SK-N-SH (cell line): ENCODE measurements at regions of chr5 and their contacts with region 1.

Region 1: DNA sequence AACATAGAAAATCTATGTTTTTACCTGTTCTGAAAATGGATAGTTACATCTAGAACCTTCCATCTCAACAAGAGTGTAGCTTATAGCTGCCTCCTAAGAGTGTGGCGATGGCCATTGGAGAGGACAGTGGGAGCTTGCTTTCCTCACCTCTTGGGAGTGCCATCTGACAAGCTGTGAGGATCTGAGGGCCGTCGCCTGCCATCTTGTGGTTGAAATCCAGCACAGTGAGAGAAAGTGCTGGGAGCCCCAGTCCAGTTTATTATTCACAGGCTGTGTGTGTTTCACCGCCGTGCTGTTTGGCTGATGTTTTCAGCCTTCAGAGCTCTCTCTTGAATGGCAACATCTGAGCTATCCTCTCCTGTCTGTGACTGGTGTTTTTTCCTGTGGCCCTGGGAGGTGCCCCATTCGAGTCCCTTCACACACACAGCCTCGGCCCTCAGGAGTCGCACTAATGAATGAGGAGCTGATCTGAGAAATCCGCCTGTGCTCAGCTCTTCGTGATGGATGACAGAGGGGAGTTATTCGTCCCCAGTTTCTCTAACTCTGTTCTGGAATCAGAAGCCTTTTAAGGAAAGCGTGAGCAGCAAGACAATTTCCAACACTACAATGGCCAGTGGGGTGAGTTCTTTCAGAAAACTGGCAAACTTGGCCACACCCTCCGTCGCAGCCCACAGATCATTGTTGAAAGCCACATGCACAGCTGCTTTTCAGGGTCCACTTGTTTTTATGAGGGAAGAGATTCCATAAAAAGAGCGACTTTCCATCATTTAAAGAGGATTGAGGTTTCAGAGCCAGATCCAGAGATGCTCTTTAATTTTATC is 170.3 kb downstream of the PDZD2 start:
- DNase-seq: peak; percentile 82
- H3K4me3 ChIP-seq: no peak overlapping the region
- H3K27ac ChIP-seq: no peak overlapping the region
- H3K4me1 ChIP-seq: peaks cover 0 to 13% of the 10 kb centered on the region in 2 experiments; a peak in 1 of 4 replicates
- H3K27me3 ChIP-seq: peaks cover 5% of the 10 kb centered on the region; the same call in 1 of the 2 replicates
- CTCF ChIP-seq: peak; percentile 65
- EP300 ChIP-seq: no peak
- RAD21 ChIP-seq: peak; percentile 98

Region 2: DNA sequence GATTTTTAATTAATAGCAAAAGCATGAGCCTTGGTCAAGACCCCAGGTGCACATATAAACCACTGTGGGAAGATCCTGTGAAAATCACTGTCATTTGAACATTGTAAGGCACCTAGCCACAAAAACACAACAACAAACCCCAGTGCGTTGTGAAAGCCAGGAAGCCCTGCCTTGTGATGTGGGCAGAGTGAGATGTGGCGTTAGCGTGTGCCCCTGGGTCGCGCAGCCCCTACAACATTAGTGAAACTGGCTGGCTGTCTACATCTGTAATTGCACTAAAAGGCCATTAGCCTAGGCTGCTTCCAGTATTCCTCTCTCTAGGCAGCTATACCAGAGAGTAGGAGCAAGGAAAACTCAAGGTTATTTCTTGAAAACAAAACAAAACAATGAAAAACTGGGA is 191.4 kb before region 1 on chr5:
- CTCF ChIA-PET with region 1: interaction called, 10 read pairs
- POLR2A ChIA-PET with region 1: no interaction called
- DNase-seq: peak; percentile 61
- H3K4me3 ChIP-seq: no peak overlapping the region
- H3K27ac ChIP-seq: peak overlapping the region in 1 of 2 experiments; percentile 24; a peak in 1 of 4 replicates
- H3K4me1 ChIP-seq: peaks cover 0 to 5% of the 10 kb centered on the region in 2 experiments; a peak in 1 of 4 replicates
- H3K27me3 ChIP-seq: no peaks in the 10 kb centered on the region
- CTCF ChIP-seq: no peak
- EP300 ChIP-seq: no peak
- RAD21 ChIP-seq: no peak

Region 3: DNA sequence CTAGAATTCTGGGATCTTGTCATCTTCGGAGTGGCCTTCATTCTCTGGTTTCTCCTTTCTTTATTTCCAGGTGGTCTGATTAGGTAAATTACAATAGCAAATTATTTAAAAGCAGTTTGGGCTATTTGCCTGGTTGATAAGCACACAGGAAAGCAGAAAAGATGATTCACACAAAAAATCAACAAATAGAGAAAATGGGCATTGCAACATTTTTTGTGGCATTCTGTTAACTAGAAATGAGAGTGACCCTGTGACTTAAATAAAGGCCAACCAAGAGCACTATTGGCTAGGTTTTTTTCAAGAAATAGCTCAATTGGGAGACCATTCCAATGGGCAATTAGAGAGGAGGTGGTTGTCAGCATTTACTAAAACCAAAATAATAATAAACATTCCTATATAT is 176.8 kb before region 1 on chr5:
- CTCF ChIA-PET with region 1: interaction called, 60 read pairs
- POLR2A ChIA-PET with region 1: no interaction called
- DNase-seq: no peak
- H3K4me3 ChIP-seq: no peak overlapping the region
- H3K27ac ChIP-seq: no peak overlapping the region
- H3K4me1 ChIP-seq: peaks cover 0 to 9% of the 10 kb centered on the region in 2 experiments; a peak in 1 of 4 replicates
- H3K27me3 ChIP-seq: peaks cover 13% of the 10 kb centered on the region
- CTCF ChIP-seq: no peak
- EP300 ChIP-seq: no peak
- RAD21 ChIP-seq: no peak

Region 4: DNA sequence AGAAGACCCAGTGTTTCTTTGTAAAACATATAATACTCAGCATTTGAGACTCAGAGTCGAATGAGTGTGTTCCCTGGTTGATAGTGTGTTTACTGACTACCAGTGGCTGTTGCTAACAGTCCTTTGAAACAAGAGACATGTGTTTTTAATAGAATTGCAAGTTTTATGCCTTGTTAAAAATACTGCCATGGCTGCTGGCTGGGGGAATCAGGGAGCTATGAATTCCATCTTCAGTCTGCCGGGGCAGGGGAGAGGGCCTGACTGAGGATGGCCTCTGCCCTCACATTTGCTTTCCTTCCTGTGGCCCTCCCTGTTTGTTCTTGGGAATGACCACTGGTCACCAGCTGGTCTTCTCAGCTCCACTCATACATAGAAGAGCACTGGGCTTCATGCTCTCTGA is 106.6 kb before region 1 on chr5:
- CTCF ChIA-PET with region 1: interaction called, 26 read pairs
- POLR2A ChIA-PET with region 1: interaction called, 5 read pairs
- DNase-seq: peak; percentile 40
- H3K4me3 ChIP-seq: no peak overlapping the region
- H3K27ac ChIP-seq: peak overlapping the region in 1 of 2 experiments; percentile 99; a peak in 2 of 4 replicates
- H3K4me1 ChIP-seq: peaks cover 0 to 26% of the 10 kb centered on the region in 2 experiments; a peak in 2 of 4 replicates
- H3K27me3 ChIP-seq: peaks cover 14% of the 10 kb centered on the region; the same call in 1 of the 2 replicates
- CTCF ChIP-seq: no peak
- EP300 ChIP-seq: no peak
- RAD21 ChIP-seq: no peak; the same call in 1 of the 2 replicates

Region 5: DNA sequence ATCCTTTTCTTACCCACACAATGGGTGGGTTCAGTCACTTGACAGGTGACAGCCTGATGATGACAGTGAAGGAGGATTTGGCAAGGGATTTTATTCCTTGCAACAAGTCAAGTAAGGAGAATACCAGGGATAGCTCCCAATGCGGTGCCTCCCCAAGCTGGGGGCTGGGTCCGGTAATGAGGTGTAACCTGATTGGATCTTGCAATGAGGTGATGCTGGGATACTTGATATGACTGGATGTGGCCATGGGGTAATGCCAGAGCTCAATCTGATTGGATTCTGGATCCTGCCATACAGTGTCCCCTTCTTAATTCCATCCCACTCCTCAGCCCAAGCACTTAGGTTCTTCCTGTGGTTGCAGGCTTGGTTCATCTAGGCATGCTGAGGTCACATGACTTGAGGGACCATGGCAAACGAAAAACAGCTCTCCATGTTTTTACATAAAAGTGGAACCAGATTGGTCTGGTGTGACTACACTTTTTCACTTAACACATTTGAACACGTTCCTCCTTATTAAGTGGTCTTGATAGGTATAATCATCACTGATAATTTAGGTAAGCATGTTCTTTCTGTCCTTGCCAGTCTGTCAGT is 10.8 kb after region 1 on chr5:
- CTCF ChIA-PET with region 1: interaction called, 35 read pairs
- POLR2A ChIA-PET with region 1: no interaction called
- DNase-seq: no peak
- H3K4me3 ChIP-seq: no peak overlapping the region
- H3K27ac ChIP-seq: no peak overlapping the region
- H3K4me1 ChIP-seq: peaks cover 0 to 3% of the 10 kb centered on the region in 2 experiments; a peak in 1 of 4 replicates
- H3K27me3 ChIP-seq: no peaks in the 10 kb centered on the region
- CTCF ChIP-seq: no peak
- EP300 ChIP-seq: no peak
- RAD21 ChIP-seq: no peak

Region 6: DNA sequence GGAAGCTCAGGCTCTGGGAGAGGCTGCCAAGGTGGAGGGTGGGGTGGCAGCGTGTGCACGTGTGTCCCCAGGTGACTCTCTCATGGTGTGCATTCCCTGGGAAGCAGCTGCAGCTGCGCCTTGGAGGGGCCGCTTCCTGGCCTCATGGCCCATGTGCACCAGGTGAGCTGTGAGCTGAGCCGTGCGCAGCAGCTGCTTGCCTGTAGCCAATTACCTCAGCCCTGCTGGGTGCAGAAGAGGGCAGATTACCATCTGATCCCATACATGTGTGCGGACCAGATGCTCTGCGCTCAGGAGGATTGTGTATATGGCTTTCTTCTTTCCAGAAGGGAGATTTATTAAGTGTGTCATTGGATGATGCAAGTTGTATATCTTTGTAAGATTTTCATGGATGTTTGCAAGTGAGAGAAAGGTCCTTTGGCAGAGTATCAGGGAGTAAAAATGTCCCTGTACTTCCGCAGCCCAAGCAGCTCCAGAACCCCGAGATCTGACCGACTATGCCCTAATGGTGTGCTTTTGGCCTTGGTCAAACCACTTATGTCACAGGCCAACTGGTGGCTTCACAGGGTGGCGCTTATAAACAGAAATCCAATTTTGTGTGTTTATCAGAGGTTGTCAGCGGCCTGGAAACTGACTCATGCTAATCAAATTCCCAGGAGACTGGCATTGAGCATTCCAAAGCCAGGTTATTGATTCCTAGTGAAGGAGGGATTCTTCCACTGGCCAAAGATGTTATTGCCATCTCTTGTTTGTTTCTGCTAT is 135.6 kb after region 1 on chr5:
- CTCF ChIA-PET with region 1: no interaction called
- POLR2A ChIA-PET with region 1: no interaction called
- DNase-seq: peak; percentile 80
- H3K4me3 ChIP-seq: no peak overlapping the region
- H3K27ac ChIP-seq: peak overlapping the region; percentile 15 to 98; a peak in 3 of 4 replicates
- H3K4me1 ChIP-seq: peaks cover 0 to 35% of the 10 kb centered on the region in 2 experiments; a peak in 2 of 4 replicates
- H3K27me3 ChIP-seq: peaks cover 17% of the 10 kb centered on the region; the same call in 1 of the 2 replicates
- CTCF ChIP-seq: no peak
- EP300 ChIP-seq: peak in 1 of 2 experiments; percentile 78; a peak in 2 of 4 replicates
- RAD21 ChIP-seq: no peak; the same call in 1 of the 2 replicates